Motor neuron (in vitro differentiated cells): ENCODE measurements at regions of chr6 and their contacts with region 1.

Region 1: DNA sequence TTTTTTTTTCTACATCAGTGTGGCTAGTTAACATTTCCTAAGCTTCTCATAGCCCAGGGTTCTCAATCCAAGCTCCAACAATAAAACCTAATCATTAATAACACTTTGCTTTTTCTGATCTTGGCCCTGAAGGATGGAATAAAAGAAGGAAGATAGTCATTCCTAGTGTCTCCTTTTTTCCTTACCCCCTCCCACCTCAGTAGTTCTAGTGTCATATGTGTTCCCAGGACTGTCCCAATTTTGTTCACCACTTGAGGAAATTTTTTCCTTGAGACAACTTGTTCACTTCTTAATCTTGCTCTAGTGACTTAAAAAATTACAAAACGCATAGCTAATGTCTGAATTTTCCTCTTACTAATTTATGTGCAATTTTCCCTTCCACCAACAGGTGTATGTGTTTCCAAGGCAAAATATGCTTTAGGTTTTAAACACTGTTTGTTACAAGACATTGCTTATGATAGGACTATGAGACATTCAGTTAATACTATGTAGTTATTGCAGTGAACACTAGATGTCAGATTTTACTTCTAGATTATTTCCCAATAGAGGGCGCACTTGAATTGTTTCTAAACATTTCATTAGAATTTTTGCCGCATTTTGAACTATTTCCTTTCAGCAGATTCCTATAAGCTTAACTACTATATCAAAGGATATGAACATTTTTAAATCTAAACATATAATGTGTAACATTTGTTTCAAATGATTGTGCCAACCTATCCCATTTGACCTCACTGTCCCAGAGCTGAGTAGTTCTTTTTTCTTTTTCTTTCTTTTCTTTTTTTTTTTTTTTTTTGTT is 18.5 kb upstream of the C6orf141 start:
- ATAC-seq: peak in 7 of 8 experiments; percentile 39 to 94 (median 58)
- H3K4me3 ChIP-seq: no peak overlapping the region
- H3K27ac ChIP-seq: no peak overlapping the region
- H3K4me1 ChIP-seq: no peaks in the 10 kb centered on the region

Region 2: DNA sequence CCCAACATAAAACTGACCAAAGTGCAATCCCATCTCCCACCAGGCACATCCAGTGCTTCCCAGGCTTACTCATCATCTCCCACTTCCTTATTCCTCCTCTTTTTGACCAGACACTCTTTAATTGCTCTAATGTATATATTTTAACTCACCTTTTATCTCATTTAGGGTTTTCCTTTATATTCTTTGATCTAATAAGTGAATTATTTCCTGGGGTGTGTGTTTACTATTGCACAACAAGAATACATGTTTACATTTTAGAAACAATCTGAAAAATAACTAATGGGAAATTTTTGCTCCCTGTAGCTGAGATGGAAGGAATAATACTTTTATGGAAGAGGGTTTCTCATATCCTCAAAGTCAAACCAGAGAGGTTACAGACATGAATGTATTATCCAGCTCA is 86.3 kb after region 1 on chr6:
- in situ Hi-C with region 1: loop called in 1 of 9 experiments (anchors 10 kb)
- ATAC-seq: no peak
- H3K4me3 ChIP-seq: no peak overlapping the region
- H3K27ac ChIP-seq: no peak overlapping the region
- H3K4me1 ChIP-seq: no peaks in the 10 kb centered on the region

Region 3: DNA sequence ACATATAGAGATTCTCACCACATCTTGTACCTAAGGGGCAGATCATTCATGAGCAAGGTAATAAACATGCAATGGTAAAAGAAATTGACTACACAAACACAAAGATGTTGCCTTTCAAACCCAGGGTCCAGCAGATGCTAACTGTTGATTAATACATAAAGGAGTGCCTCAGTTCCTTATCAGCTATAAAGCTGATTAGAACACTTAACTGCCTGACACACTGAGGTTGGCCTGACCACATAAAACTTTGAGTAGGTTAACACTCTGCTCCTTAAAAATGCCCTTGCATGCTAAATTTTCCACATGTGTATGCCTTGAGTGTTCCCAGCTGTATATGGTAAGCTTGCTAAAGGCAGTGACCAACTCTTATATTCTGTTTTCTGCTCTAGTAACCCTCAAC is 166.5 kb after region 1 on chr6:
- in situ Hi-C with region 1: no loop called
- ATAC-seq: no peak
- H3K4me3 ChIP-seq: no peak overlapping the region
- H3K27ac ChIP-seq: no peak overlapping the region
- H3K4me1 ChIP-seq: no peaks in the 10 kb centered on the region

Region 4: GRCh38 chr6:49849213-49849907 is 317.4 kb after region 1 on chr6:
- in situ Hi-C with region 1: loop called in 3 of 9 experiments (anchors 10 to 25 kb)
- ATAC-seq: peak; percentile 65 to 84 (median 76)
- H3K4me3 ChIP-seq: no peak overlapping the region
- H3K27ac ChIP-seq: no peak overlapping the region
- H3K4me1 ChIP-seq: no peaks in the 10 kb centered on the region

Region 5: GRCh38 chr6:49856282-49856681 is 324.3 kb after region 1 on chr6:
- in situ Hi-C with region 1: loop called in 1 of 9 experiments (anchors 25 kb)
- ATAC-seq: peak in 2 of 8 experiments; percentile 77 to 94
- H3K4me3 ChIP-seq: no peak overlapping the region
- H3K27ac ChIP-seq: no peak overlapping the region
- H3K4me1 ChIP-seq: no peaks in the 10 kb centered on the region